ENCODE measurements at regions of chr2 and their contacts with region 1.

Region 1: DNA sequence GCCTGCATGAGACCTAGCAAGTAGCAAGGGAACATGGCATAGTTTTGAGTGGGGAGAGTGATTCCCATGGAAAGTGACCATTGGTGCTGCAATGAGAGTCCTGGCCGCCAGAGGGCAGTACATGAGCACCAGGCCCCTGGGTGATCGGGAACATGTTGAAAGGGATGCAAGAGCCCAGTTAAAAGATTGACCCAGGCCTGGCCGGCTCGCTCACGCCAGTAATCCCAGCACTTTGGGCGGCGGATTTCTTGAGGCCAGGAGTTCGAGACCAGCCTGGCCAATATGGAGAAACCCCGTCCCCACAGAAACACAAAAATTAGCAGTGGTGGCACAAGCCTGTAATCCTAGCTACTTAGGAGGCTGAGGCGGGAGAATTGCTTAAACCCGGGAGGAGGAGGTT is 22.2 kb downstream of the FAP start:
- DNase-seq: peak; percentile 75
- ATAC-seq: peak; percentile 79

Region 2: GRCh38 chr2:162113776-162114168 is 107.3 kb before region 1 on chr2:
- intact Hi-C with region 1: no loop called
- DNase-seq: no peak
- ATAC-seq: peak; percentile 97

Region 3: DNA sequence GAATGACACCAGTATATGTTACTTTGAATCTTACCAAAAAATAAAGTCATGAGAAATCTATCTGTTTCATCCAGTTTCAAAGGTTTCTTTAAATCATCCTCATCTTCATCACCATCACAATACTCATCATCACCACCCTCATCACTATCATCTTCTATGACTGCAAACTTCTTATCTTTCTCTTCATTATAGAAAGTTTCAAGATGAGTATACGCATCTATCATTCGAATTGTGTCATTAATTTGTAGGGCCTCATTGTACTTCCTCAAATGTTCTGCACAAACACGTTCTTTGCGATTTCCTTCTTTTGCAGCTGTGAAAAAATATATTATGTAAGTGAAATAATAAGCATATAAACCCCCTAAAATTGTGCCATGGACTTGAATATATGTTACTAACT is 56.3 kb after region 1 on chr2:
- intact Hi-C with region 1: loop called (anchors 10 kb)
- DNase-seq: no peak
- ATAC-seq: no peak

Region 4: GRCh38 chr2:162768652-162769051 is 547.6 kb after region 1 on chr2:
- intact Hi-C with region 1: no loop called
- DNase-seq: no peak
- ATAC-seq: no peak